Mammary epithelial cell (primary cell): ENCODE measurements at regions of chr12 and their contacts with region 1.

Region 1: DNA sequence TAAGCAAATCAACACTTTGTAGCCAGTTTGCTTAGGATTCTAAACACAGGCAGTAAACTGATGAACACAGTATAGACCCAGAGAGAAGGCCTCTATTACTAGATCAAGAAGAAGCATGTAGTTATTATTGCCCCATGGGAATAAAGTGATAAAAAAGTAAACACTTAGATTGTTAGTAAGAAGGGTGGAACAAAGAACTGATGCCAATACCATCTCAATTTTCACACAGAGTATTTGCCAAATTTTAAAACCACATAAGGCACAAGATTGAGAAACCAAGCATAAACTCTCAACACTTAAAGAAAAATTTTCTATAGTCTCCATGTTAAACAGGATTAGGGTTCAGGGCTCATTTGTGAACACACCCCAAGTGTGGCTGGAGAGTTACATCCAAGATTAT is 77.0 kb upstream of the SYT1 start:
- DNase-seq: no peak
- H3K4me3 ChIP-seq: no peak overlapping the region
- H3K27ac ChIP-seq: no peak overlapping the region
- H3K4me1 ChIP-seq: no peaks in the 10 kb centered on the region
- H3K27me3 ChIP-seq: no peaks in the 10 kb centered on the region
- CTCF ChIP-seq: no peak

Region 2: GRCh38 chr12:77788231-77789168 is 999.1 kb before region 1 on chr12:
- CTCF ChIA-PET with region 1: no interaction called
- dilution Hi-C with region 1: no loop called
- in situ Hi-C with region 1: no loop called
- intact Hi-C with region 1: no loop called
- DNase-seq: no peak
- H3K4me3 ChIP-seq: no peak overlapping the region
- H3K27ac ChIP-seq: no peak overlapping the region
- H3K4me1 ChIP-seq: no peaks in the 10 kb centered on the region
- H3K27me3 ChIP-seq: no peaks in the 10 kb centered on the region
- CTCF ChIP-seq: no peak

Region 3: GRCh38 chr12:78641837-78642423 is 145.6 kb before region 1 on chr12:
- CTCF ChIA-PET with region 1: no interaction called
- dilution Hi-C with region 1: no loop called
- in situ Hi-C with region 1: no loop called
- intact Hi-C with region 1: loop called (anchors 10 kb)
- DNase-seq: peak; percentile 4
- H3K4me3 ChIP-seq: no peak overlapping the region
- H3K27ac ChIP-seq: no peak overlapping the region
- H3K4me1 ChIP-seq: no peaks in the 10 kb centered on the region
- H3K27me3 ChIP-seq: no peaks in the 10 kb centered on the region
- CTCF ChIP-seq: peak; percentile 19 to 42